ENCODE measurements at regions of chr10 and their contacts with region 1.

Region 1: DNA sequence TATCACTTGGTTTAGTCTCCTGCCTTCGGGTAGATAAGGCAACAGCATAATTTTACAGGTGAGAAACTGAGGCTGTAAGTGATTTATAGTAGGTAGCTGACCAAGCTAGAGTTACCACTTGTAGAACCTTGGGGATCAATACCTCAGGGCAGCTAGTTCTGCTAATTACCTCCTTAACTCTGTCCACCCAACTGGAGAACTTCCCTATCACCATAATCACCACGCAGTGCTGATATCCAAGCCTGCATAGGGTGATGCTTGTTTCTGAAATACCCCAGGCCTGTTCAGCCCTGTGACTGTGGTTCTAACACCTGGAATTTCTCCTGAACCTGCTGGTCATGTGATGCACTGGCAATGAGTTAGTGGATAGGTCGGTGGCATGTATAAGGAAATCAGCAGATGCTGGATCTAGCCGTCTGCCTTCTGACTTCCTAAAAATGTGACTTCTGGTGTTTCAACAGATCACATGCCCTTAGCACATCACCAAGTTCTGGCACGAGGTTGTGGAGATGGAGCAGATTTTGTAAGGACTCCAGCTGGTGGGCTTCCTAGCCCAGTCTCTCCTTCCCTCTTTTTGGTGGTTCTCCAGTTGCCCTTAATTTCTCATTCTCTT is 15.3 kb downstream of the PLAU start:
- DNase-seq: no peak
- H3K4me3 ChIP-seq: no peak overlapping the region
- H3K27ac ChIP-seq: no peak overlapping the region
- H3K4me1 ChIP-seq: peaks cover 4 to 8% of the 10 kb centered on the region in 2 donors
- H3K27me3 ChIP-seq: no peaks in the 10 kb centered on the region
- CTCF ChIP-seq: no peak
- POLR2A ChIP-seq: no peak

Region 2: GRCh38 chr10:73096449-73097304 is 829.6 kb before region 1 on chr10 and contains the start of gene P4HA1:
- intact Hi-C with region 1: no loop called
- DNase-seq: peak; percentile 99 to 100
- H3K4me3 ChIP-seq: peak within 1 kb of the TSS; percentile 71 to 98 (median 72)
- H3K27ac ChIP-seq: peak within 1 kb of the TSS; percentile 94 to 98 (median 97)
- H3K4me1 ChIP-seq: peaks cover 0 to 11% of the 10 kb centered on the region in 2 donors
- H3K27me3 ChIP-seq: no peaks in the 10 kb centered on the region
- CTCF ChIP-seq: peak in 5 of 6 experiments; percentile 15 to 69 (median 60)
- POLR2A ChIP-seq: peak; percentile 93 to 99
- total RNA-seq, gene P4HA1: 21.8 to 29.1 (median 24.6) TPM

Region 3: GRCh38 chr10:73287441-73287840 is 638.8 kb before region 1 on chr10:
- intact Hi-C with region 1: no loop called
- DNase-seq: no peak
- H3K4me3 ChIP-seq: no peak overlapping the region
- H3K27ac ChIP-seq: no peak overlapping the region
- H3K4me1 ChIP-seq: no peaks in the 10 kb centered on the region
- H3K27me3 ChIP-seq: no peaks in the 10 kb centered on the region
- CTCF ChIP-seq: no peak
- POLR2A ChIP-seq: no peak

Region 4: GRCh38 chr10:73894245-73894971 is 31.9 kb before region 1 on chr10:
- intact Hi-C with region 1: loop called (anchors 5 kb)
- DNase-seq: no peak
- H3K4me3 ChIP-seq: no peak overlapping the region
- H3K27ac ChIP-seq: no peak overlapping the region
- H3K4me1 ChIP-seq: peaks cover 0 to 9% of the 10 kb centered on the region in 2 donors
- H3K27me3 ChIP-seq: no peaks in the 10 kb centered on the region
- CTCF ChIP-seq: no peak
- POLR2A ChIP-seq: no peak

Measured in thyroid gland (tissue), 4 donors.